ENCODE measurements at regions of chr1 and their contacts with region 1.

Region 1: DNA sequence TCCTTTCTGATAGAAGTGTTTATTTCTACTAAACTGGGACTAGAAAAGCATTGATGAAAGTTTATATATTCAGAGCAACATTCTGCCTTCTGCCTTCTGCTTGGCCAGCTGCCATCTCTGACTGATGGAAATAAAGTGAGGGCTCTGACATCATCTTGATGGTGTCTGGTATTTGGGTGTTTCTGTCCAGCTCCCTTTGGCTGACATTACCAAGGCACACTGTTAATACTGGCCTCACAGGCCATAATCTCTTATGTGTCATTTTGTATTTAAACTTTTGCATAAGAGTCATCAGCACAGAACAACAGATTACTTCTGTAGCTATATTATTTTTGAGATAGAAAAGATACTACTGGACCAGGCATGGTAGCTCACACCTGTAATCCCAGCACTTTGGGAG is 216.9 kb downstream of the RYR2 start:
- DNase-seq: no peak
- H3K4me3 ChIP-seq: no peak overlapping the region
- H3K4me1 ChIP-seq: no peaks in the 10 kb centered on the region
- H3K27me3 ChIP-seq: no peaks in the 10 kb centered on the region

Region 2: GRCh38 chr1:237358555-237358954 is 99.7 kb after region 1 on chr1:
- in situ Hi-C with region 1: loop called (anchors 25 kb)
- DNase-seq: no peak
- H3K4me3 ChIP-seq: no peak overlapping the region
- H3K4me1 ChIP-seq: peaks cover 6% of the 10 kb centered on the region
- H3K27me3 ChIP-seq: peaks cover 2% of the 10 kb centered on the region; the same call in 1 of the 2 replicates